IMR-90 (cell line): ENCODE measurements at regions of chr12 and their contacts with region 1.

Region 1: DNA sequence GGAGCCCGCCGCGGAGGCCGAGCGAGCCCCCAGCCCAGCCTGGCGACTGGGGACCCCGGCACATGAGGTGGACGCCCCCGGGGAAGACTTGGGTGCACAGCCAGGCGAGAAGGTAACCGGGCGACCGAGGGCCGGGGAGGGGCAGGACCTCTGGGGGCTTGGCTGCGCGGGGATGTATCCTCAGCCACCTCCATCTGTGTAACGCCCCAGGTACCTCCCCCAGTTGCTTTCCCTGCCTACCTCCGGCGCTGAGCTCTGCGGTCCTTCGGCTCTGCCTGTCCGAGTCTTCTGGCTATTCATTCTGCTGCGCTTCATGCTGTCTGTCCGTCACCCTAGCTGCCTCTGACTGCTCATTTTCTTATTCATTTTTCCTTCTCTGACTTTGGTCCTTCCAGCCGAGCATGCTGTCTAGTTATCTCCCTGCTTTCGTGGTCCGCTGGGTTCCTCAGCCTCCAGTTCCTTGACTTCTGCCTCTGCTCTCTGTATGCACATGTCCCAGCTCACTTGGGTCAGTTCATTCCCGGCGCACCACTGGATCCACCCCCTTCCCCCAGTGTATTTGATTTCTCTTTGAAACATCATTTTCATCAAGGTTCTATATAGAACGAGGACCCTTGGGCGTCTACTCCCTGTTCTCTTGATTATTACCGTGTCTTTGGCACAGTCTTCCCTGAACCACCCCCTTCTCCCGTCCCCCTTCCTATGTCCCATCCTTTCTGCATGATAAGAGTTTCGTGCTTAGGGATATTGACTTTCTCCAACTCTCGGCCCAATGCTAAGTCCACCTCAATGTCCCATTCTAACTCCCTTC is 612 bp downstream of the PHC1 start:
- DNase-seq: peak; percentile 37
- ATAC-seq: peak; percentile 72
- H3K4me3 ChIP-seq: peak overlapping the region; percentile 78
- H3K27ac ChIP-seq: peak overlapping the region; percentile 33
- H3K4me1 ChIP-seq: peaks cover 2% of the 10 kb centered on the region
- H3K27me3 ChIP-seq: no peaks in the 10 kb centered on the region
- CTCF ChIP-seq: no peak
- POLR2A ChIP-seq: no peak
- RAD21 ChIP-seq: no peak

Region 2: DNA sequence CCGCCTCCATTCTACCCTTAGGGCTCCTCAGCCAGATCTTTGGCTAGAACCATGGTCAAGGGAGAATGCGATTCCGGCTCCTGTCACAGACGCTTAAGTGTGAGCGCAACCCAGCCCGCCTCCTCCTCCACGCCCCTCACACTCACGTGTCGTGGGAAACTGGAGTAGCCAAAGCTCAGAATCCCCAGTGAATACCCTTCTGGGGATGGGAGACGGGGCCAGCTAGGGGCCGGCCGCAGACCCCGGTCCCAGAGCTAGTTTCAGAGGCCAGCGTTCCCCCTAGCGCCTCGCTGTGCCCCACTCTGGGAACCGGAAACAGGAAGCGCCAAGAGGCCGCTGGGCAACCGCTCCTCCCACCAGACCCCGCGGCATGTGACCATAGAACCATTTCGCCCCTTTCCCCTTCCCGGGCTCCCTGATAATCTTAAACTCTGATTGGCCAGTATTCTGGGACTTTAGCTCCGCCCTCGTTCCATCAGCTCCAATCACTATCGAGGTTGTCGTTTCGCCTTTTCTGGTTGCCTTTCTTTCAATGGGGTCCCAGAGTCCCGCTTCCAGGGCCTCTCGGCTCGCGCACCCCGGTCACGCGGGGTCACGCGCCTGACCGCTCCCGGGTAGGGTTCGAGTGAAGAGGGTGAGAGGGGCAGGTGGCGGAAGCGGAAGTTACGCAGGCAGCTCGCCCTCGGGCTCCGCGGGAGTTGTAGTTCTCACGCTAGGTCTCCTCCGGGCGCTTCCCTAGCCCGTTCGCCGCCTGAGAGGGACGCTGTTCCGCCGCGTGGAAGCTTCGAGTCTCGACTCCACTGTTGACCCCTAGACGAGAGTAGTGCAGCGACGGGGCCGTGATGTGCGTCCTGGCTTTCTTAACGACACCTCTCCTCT is 34.7 kb after region 1 on chr12 and contains the start of gene M6PR:
- CTCF ChIA-PET with region 1: interaction called, 4 read pairs
- POLR2A ChIA-PET with region 1: no interaction called
- dilution Hi-C with region 1: no loop called
- in situ Hi-C with region 1: no loop called
- intact Hi-C with region 1: loop called (anchors 2 kb)
- DNase-seq: peak; percentile 92
- ATAC-seq: peak; percentile 94
- H3K4me3 ChIP-seq: peak within 1 kb of the TSS; percentile 64
- H3K27ac ChIP-seq: peak within 1 kb of the TSS; percentile 77
- H3K4me1 ChIP-seq: no peaks in the 10 kb centered on the region
- H3K27me3 ChIP-seq: no peaks in the 10 kb centered on the region
- CTCF ChIP-seq: peak; percentile 59
- POLR2A ChIP-seq: peak; percentile 84; the same call in 1 of the 2 replicates
- RAD21 ChIP-seq: peak; percentile 47
- total RNA-seq, gene M6PR: 118 and 140 TPM in 2 replicates